ENCODE measurements at regions of chr18 and their contacts with region 1.

Region 1: DNA sequence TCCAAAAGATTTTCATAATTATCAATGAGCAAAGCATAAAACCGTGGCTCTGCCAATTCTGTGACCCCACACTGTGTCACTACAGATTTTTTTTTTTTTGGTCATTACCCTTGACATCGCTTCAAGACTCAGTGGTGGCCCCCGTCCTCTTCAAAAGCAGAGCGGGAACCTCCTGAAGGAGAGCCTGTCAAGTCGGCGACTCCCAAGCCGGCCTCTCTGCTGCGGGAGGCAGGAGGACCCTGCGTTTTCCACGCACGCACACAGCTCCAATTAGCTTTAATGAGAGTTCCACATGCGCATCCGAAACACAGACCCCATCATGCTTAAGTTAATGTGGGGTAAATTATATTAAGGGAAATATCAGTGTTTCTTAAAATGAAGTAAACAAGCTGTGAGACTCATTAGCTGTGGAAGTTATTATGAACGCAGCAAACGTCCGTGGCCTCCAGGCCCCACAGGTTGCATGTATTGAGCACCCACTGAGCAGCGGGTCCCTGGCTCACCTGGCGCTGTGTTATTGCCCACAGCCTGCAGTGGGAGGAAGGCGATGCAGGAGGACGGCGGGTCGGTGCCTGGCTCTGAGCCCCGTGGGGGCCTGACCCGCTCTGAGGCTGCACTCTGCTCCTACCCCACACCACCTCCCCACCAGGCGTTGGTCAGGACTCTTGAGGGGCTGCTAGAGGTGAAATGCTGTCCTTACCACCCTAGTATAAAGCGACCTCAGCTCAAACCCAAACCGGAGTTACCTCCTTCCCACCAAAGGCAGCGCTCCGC is 181.0 kb upstream of the SALL3 start:
- DNase-seq: no peak
- H3K4me3 ChIP-seq: no peak overlapping the region
- H3K27ac ChIP-seq: no peak overlapping the region
- H3K4me1 ChIP-seq: no peaks in the 10 kb centered on the region
- H3K27me3 ChIP-seq: no peaks in the 10 kb centered on the region
- CTCF ChIP-seq: no peak
- POLR2A ChIP-seq: no peak

Region 2: GRCh38 chr18:78849046-78849445 is 50.5 kb after region 1 on chr18:
- intact Hi-C with region 1: loop called (anchors 5 kb)
- DNase-seq: no peak
- H3K4me3 ChIP-seq: no peak overlapping the region
- H3K27ac ChIP-seq: no peak overlapping the region
- H3K4me1 ChIP-seq: no peaks in the 10 kb centered on the region
- H3K27me3 ChIP-seq: no peaks in the 10 kb centered on the region
- CTCF ChIP-seq: no peak
- POLR2A ChIP-seq: no peak

Region 3: GRCh38 chr18:79912409-79912991 is 1113.9 kb after region 1 on chr18:
- intact Hi-C with region 1: no loop called
- DNase-seq: peak; percentile 11
- H3K4me3 ChIP-seq: no peak overlapping the region
- H3K27ac ChIP-seq: no peak overlapping the region
- H3K4me1 ChIP-seq: no peaks in the 10 kb centered on the region
- H3K27me3 ChIP-seq: no peaks in the 10 kb centered on the region
- CTCF ChIP-seq: no peak
- POLR2A ChIP-seq: no peak